ENCODE measurements at regions of chr4 and their contacts with region 1.

Region 1: DNA sequence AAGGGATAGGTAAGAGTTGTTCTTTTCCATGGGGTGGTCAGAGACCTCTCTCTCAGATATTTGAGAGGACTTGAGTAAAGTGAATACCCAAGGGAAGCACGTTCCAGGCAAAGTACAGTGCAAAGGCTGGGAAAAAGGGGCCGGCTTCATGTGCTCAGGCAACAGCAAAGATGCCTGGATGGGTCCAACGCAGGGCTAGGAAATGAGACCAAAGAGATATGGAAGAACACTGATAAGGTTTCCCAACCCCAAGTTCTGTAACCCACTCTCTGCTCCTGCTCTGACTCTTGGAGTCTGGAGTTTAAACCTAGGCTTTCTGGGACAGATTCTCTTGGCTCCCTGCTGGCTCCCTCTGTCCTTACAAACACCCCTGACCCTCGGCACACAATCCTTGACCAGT is 36.2 kb upstream of the PROM1 start:
- DNase-seq: no peak
- H3K4me3 ChIP-seq: no peak overlapping the region
- H3K27ac ChIP-seq: no peak overlapping the region
- H3K4me1 ChIP-seq: no peaks in the 10 kb centered on the region
- H3K27me3 ChIP-seq: no peaks in the 10 kb centered on the region
- CTCF ChIP-seq: no peak
- EP300 ChIP-seq: no peak
- POLR2A ChIP-seq: no peak

Region 2: GRCh38 chr4:16092682-16093319 is 27.2 kb before region 1 on chr4:
- intact Hi-C with region 1: loop called in 1 of 4 experiments (anchors 1 kb)
- DNase-seq: no peak
- H3K4me3 ChIP-seq: no peak overlapping the region
- H3K27ac ChIP-seq: no peak overlapping the region
- H3K4me1 ChIP-seq: no peaks in the 10 kb centered on the region
- H3K27me3 ChIP-seq: no peaks in the 10 kb centered on the region
- CTCF ChIP-seq: no peak
- EP300 ChIP-seq: no peak
- POLR2A ChIP-seq: no peak

Measured in ovary (tissue), 10 donors.